Activated CD4-positive, alpha-beta memory T cell treated with anti-CD3 and anti-CD28 coated beads for 36 hours (primary cell): ENCODE measurements at regions of chr2 and their contacts with region 1.

Region 1: DNA sequence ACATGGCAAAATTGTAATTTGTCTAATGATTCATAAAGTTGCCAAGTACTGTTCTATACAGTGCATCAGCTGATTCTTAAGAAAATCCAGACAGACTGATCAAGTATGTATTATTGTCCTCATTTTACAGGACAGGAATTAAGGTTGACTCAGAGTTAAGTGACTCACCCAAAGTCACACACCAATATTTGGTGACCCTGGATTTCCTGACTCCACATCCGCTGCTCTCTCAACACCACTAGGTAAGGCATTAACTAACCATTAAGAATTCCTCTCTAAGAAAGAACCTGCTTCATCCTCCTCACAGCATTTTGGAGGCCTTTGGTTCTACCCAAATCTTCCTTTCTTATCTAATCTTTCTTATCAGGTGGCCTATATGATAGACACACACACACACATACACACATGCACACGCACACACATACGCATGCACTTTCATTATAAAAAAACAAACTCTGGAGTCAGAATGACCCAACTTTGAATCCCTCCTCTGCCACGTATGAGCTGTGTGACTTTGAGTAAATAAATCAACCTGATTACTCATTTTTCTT is 150.8 kb downstream of the ANKRD44 start:
- DNase-seq: peak; percentile 64
- H3K4me3 Mint-ChIP-seq: peak overlapping the region; percentile 0
- H3K27ac Mint-ChIP-seq: peak overlapping the region; percentile 87
- H3K4me1 Mint-ChIP-seq: peaks cover 72% of the 10 kb centered on the region
- H3K27me3 Mint-ChIP-seq: no peaks in the 10 kb centered on the region

Region 2: DNA sequence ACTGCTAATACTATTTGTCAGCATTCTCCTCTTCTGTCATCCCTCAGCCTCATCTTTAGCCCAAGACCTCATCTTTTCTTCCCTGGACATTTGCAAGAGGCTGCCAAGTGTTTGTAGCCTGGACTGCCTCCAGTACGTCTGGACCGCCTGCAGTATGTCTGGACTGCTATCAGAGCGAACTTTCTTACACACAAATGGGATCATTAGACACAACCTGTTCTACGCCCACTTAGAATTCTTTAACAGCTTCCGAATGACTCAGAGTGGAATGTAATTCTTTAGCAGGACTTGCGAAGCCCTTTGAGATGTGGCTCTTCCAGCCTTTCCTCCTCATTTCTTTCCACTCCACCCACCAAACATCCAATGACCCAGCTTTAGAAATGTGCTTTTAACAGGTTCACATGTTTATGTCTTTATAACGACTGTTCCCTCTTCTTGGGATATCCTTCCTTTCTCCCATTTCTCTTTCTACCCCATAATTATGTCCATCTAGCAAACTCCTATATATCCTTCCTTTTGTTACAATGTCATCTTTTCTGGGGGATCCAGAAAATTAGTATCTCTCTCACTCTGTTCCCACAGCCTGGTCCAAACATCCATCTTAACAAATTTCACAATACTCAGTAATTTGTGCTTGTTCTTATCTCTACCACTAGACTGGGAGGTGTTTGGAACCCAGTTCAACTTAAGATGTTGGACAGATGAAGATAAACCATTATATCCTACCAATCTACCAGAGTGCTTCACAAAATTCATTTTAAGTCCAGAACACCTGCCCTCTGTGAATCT is 62.0 kb before region 1 on chr2:
- CTCF ChIA-PET with region 1: no interaction called
- POLR2A ChIA-PET with region 1: no interaction called
- intact Hi-C with region 1: no loop called
- DNase-seq: no peak
- H3K4me3 Mint-ChIP-seq: no peak overlapping the region
- H3K27ac Mint-ChIP-seq: peak overlapping the region; percentile 10
- H3K4me1 Mint-ChIP-seq: no peaks in the 10 kb centered on the region
- H3K27me3 Mint-ChIP-seq: no peaks in the 10 kb centered on the region

Region 3: DNA sequence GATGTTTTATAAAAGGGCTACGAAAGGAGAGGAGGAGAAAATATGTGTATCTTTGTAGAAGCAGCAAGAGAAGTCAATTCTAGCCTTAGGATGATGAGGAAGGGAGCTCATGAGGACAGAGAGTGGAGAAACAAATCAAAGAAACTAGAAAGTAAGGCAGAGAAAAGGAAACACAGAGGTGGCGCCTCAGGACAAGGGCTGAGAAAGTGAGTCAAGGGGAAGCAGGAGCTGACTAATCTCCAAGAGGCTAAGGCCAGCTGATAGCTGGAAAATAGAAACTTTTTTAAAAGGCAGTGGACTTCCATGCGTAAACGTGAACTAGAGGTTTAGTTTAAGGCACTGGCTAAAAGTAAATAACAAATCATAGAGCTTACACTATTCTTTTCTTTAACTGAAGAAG is 22.5 kb before region 1 on chr2:
- CTCF ChIA-PET with region 1: interaction called, 4 read pairs
- POLR2A ChIA-PET with region 1: interaction called, 4 read pairs
- intact Hi-C with region 1: loop called (anchors 1 kb)
- DNase-seq: peak; percentile 52
- H3K4me3 Mint-ChIP-seq: no peak overlapping the region
- H3K27ac Mint-ChIP-seq: peak overlapping the region; percentile 44
- H3K4me1 Mint-ChIP-seq: peaks cover 85% of the 10 kb centered on the region
- H3K27me3 Mint-ChIP-seq: no peaks in the 10 kb centered on the region

Region 4: DNA sequence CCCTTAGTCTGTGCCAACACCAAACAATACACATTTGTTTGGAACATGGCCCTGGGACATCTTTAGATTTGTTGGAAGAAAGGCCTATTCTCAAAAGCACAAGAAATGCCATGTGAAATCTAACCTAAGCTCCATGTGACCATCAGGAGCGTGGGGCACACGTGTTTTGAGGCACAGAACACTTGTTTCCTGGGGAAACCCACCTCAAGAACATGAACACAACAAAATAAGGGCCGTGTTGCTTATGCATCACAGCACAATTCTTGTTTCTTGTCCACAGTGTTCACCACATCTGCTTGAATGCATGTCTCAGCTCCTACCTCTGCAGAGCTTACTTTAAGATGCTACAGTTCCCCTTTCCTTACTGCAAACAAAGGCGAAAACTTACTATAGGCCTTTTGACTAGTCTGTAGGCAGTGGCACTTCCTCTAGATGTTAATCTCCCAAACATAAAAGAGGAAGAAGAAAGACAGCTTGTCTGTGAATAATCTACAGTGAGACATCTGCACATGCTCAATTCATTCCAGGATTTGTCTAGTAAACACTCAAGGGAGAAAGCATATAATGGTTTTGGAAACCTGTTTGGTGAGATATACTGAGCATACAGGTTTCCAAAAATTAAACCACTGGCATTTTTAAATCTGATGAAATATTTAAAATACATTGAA is 14.1 kb before region 1 on chr2:
- CTCF ChIA-PET with region 1: interaction called, 5 read pairs
- POLR2A ChIA-PET with region 1: interaction called, 3 read pairs
- intact Hi-C with region 1: loop called (anchors 1 kb)
- DNase-seq: no peak
- H3K4me3 Mint-ChIP-seq: no peak overlapping the region
- H3K27ac Mint-ChIP-seq: peak overlapping the region; percentile 87
- H3K4me1 Mint-ChIP-seq: peaks cover 64% of the 10 kb centered on the region
- H3K27me3 Mint-ChIP-seq: no peaks in the 10 kb centered on the region

Region 5: DNA sequence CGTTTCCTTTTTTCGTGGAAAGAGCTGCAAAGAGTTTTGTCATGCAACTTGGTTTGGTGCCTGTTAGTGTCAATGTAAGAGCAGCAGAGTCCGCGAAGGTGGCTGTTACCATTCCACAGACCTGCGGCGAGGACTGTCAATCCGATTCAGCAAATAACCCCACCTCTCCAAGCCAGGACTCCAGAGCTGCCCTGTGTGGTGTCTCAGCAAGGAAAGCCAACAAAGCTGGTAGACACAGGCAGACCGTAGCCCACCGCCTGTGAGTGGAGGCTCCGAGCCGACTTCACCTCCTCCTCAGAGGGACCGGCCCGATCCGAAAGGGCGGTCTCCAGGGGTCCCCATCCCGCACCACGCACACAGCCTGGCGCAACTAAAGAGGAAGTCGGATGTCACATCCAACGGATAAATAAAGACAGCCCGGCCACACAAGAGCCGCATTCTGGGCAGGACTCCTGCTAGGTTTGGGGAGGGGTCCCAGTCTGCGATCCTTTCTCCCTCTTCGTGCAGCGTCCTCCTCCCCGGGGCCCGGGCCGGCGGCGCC is 150.0 kb after region 1 on chr2:
- CTCF ChIA-PET with region 1: no interaction called
- POLR2A ChIA-PET with region 1: no interaction called
- intact Hi-C with region 1: no loop called
- DNase-seq: peak; percentile 63
- H3K4me3 Mint-ChIP-seq: peak overlapping the region; percentile 95
- H3K27ac Mint-ChIP-seq: peak overlapping the region; percentile 99
- H3K4me1 Mint-ChIP-seq: peaks cover 71% of the 10 kb centered on the region
- H3K27me3 Mint-ChIP-seq: no peaks in the 10 kb centered on the region